CD4-positive, alpha-beta memory T cell (primary cell): ENCODE measurements at regions of chr12 and their contacts with region 1.

Region 1: DNA sequence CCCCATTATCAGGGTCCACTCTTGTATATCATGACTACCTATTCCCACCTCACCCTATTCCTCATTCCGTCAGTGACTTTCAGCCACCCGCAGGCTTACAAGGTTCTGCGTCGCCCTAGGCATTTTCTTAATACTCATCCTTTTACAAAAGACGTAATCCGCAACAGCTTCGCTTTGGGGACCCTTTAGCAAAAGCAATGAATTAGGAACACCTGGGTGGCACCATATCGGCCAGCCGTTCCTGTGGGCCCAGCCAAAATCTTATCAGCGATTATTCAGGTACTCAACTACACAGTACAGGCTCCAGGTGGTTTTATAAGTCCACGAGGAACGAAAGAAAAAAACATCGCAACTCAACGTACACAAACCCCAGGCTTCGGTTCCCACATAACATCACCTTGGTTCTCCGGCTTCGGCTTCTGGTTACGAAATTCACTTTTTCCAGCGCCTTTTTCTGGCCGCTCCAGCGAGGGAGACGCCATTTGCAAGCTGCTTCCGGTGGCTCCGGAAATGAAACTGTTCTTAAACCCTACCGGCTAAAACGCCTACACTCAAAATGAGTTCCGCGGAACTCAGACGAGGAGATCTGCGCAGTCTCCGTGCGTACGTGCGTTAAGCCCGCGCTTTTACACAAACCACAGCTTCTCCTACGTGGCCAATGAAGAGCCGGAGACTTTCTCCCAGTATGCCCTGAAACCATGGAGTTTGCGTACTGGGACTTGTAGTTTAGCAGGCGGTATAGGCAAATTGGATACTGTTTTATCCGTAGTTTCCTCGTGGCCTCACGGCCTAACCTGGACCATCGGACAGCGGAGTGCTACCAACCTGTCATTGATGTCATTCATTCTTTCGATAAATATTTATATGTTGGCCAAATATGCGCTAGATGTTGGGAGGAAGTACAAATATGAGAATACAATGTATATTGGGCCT is at the start of gene KRR1:
- DNase-seq: peak; percentile 88 to 94 (median 92)
- H3K4me3 ChIP-seq: peak within 1 kb of the TSS; percentile 85 to 99
- H3K4me3 Mint-ChIP-seq: peak within 1 kb of the TSS; percentile 99 to 100 (median 100)
- H3K27ac ChIP-seq: peak within 1 kb of the TSS; percentile 94
- H3K27ac Mint-ChIP-seq: peak within 1 kb of the TSS; percentile 98 to 100 (median 100)
- H3K4me1 ChIP-seq: peaks cover 27% of the 10 kb centered on the region
- H3K4me1 Mint-ChIP-seq: peaks cover 25 to 42% (median 31%) of the 10 kb centered on the region in 4 donors
- H3K27me3 ChIP-seq: no peaks in the 10 kb centered on the region
- H3K27me3 Mint-ChIP-seq: no peaks in the 10 kb centered on the region
- total RNA-seq, gene KRR1: 60.7 to 65.0 TPM

Region 2: GRCh38 chr12:75087654-75088053 is 423.7 kb before region 1 on chr12:
- CTCF ChIA-PET with region 1: no interaction called
- POLR2A ChIA-PET with region 1: no interaction called
- intact Hi-C with region 1: no loop called
- DNase-seq: no peak
- H3K4me3 ChIP-seq: no peak overlapping the region
- H3K4me3 Mint-ChIP-seq: no peak overlapping the region
- H3K27ac ChIP-seq: no peak overlapping the region
- H3K27ac Mint-ChIP-seq: peak overlapping the region in 1 of 7 donors; percentile 25
- H3K4me1 ChIP-seq: no peaks in the 10 kb centered on the region
- H3K4me1 Mint-ChIP-seq: no peaks in the 10 kb centered on the region
- H3K27me3 ChIP-seq: no peaks in the 10 kb centered on the region
- H3K27me3 Mint-ChIP-seq: no peaks in the 10 kb centered on the region

Region 3: GRCh38 chr12:75334384-75335030 is 176.9 kb before region 1 on chr12 and contains the start of gene GLIPR1L1:
- CTCF ChIA-PET with region 1: interaction called, 13 read pairs
- POLR2A ChIA-PET with region 1: interaction called, 12 read pairs
- intact Hi-C with region 1: no loop called
- DNase-seq: peak; percentile 76 to 82 (median 77)
- H3K4me3 ChIP-seq: peak within 1 kb of the TSS in 1 of 2 donors; percentile 54
- H3K4me3 Mint-ChIP-seq: peak within 1 kb of the TSS; percentile 70 to 86 (median 80)
- H3K27ac ChIP-seq: no peak within 1 kb of the TSS
- H3K27ac Mint-ChIP-seq: peak within 1 kb of the TSS in 1 of 7 donors; percentile 54
- H3K4me1 ChIP-seq: peaks cover 21% of the 10 kb centered on the region
- H3K4me1 Mint-ChIP-seq: peaks cover 13 to 21% (median 17%) of the 10 kb centered on the region in 4 donors
- H3K27me3 ChIP-seq: peaks cover 6% of the 10 kb centered on the region
- H3K27me3 Mint-ChIP-seq: peaks cover 6 to 12% of the 10 kb centered on the region in 2 donors
- total RNA-seq, gene GLIPR1L1: not detected

Region 4: GRCh38 chr12:75814851-75815754 is 303.7 kb after region 1 on chr12:
- CTCF ChIA-PET with region 1: no interaction called
- POLR2A ChIA-PET with region 1: no interaction called
- intact Hi-C with region 1: loop called (anchors 10 kb)
- DNase-seq: peak; percentile 39 to 66 (median 59)
- H3K4me3 ChIP-seq: no peak overlapping the region
- H3K4me3 Mint-ChIP-seq: peak overlapping the region in 1 of 8 donors; percentile 36
- H3K27ac ChIP-seq: peak overlapping the region; percentile 39
- H3K27ac Mint-ChIP-seq: peak overlapping the region; percentile 64 to 93 (median 87)
- H3K4me1 ChIP-seq: peaks cover 23% of the 10 kb centered on the region
- H3K4me1 Mint-ChIP-seq: peaks cover 10 to 26% (median 18%) of the 10 kb centered on the region in 4 donors
- H3K27me3 ChIP-seq: no peaks in the 10 kb centered on the region
- H3K27me3 Mint-ChIP-seq: no peaks in the 10 kb centered on the region

Region 5: GRCh38 chr12:76559400-76560085 is 1048.2 kb after region 1 on chr12 and contains the start of gene OSBPL8:
- CTCF ChIA-PET with region 1: no interaction called
- POLR2A ChIA-PET with region 1: interaction called, 9 read pairs
- intact Hi-C with region 1: loop called (anchors 2 kb)
- DNase-seq: peak; percentile 89 to 94 (median 90)
- H3K4me3 ChIP-seq: peak within 1 kb of the TSS; percentile 95
- H3K4me3 Mint-ChIP-seq: peak within 1 kb of the TSS; percentile 96 to 97 (median 96)
- H3K27ac ChIP-seq: peak within 1 kb of the TSS; percentile 89
- H3K27ac Mint-ChIP-seq: peak within 1 kb of the TSS; percentile 94 to 99 (median 98)
- H3K4me1 ChIP-seq: peaks cover 46% of the 10 kb centered on the region
- H3K4me1 Mint-ChIP-seq: peaks cover 24 to 52% (median 31%) of the 10 kb centered on the region in 4 donors
- H3K27me3 ChIP-seq: no peaks in the 10 kb centered on the region
- H3K27me3 Mint-ChIP-seq: no peaks in the 10 kb centered on the region
- total RNA-seq, gene OSBPL8: 126 to 127 TPM